ENCODE measurements at regions of chr22 and their contacts with region 1.

Region 1: DNA sequence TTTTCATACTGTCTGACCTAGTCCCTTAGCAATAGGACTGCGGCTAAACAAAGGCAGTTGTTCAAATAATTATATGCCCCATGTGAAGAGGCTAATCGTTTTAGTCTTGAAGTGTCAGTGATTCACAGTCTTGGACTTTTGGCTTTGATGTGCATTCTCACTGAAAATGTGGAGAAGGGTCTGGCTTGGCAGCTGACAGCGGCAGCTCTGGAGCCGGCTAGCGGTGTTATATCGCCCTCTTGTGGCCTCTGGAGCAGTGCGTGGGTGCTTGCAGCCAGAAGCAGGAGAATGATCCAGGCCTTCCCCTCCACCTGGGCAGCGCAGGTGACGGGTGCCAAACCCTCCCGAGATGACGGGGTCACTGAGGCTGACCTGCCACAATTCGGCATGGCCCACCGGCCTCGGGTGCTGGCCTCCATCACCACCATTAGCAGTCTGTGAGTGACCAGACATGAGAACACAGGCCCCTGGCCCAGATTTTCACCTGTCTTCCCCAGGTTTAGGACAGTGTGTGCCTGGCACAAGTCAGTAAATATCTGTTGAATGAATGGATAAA is 90.3 kb upstream of the PITPNB start:
- DNase-seq: peak; percentile 72 to 83 (median 79)
- ATAC-seq: peak; percentile 98
- H3K4me3 ChIP-seq: no peak overlapping the region
- H3K27ac ChIP-seq: no peak overlapping the region
- H3K4me1 ChIP-seq: no peaks in the 10 kb centered on the region
- H3K27me3 ChIP-seq: no peaks in the 10 kb centered on the region
- CTCF ChIP-seq: peak; percentile 83 to 89 (median 85)
- EP300 ChIP-seq: no peak
- POLR2A ChIP-seq: no peak
- RAD21 ChIP-seq: peak; percentile 78 to 86

Region 2: GRCh38 chr22:27405672-27406388 is 603.5 kb before region 1 on chr22:
- CTCF ChIA-PET with region 1: no interaction called
- POLR2A ChIA-PET with region 1: no interaction called
- in situ Hi-C with region 1: loop called (anchors 25 kb)
- intact Hi-C with region 1: no loop called
- DNase-seq: peak; percentile 43 to 70 (median 66)
- ATAC-seq: peak; percentile 79
- H3K4me3 ChIP-seq: no peak overlapping the region
- H3K27ac ChIP-seq: no peak overlapping the region
- H3K4me1 ChIP-seq: no peaks in the 10 kb centered on the region
- H3K27me3 ChIP-seq: no peaks in the 10 kb centered on the region; a peak in 1 of 5 replicates
- CTCF ChIP-seq: peak; percentile 54 to 73 (median 62)
- EP300 ChIP-seq: no peak
- POLR2A ChIP-seq: no peak
- RAD21 ChIP-seq: peak; percentile 30 to 62

Region 3: DNA sequence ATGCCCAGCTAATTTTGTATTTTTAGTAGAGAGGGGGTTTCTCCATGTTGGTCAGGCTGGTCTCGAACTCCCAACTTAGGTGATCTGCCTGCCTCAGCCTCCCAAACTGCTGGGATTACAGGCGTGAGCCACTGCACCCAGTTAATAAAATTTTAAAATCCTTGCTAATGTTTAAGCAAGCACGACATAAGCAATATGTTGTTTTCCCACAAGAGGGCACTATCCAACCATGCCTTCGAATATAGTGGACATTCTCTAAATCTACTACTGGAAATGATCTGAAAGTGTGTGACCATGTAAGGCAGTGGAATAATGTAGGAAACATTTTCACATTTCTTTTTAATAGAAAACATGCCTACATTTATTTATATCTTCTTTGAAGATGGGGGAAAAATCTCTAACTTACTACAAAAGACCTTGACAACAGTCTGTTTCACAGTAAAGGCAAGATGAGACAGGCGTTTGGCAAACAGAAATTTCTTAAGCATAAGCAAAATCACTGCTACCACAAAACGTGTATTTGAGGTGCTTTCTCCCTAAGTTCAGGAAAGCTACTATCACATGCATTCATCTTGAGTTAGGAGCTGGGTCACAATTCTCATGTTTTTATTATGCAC is 128.5 kb before region 1 on chr22:
- CTCF ChIA-PET with region 1: interaction called, 22 read pairs
- POLR2A ChIA-PET with region 1: interaction called, 3 read pairs
- in situ Hi-C with region 1: loop called (anchors 5 kb)
- intact Hi-C with region 1: loop called (anchors 2 kb)
- DNase-seq: peak in 2 of 4 experiments; percentile 17 to 58
- ATAC-seq: peak; percentile 82
- H3K4me3 ChIP-seq: no peak overlapping the region
- H3K27ac ChIP-seq: no peak overlapping the region
- H3K4me1 ChIP-seq: no peaks in the 10 kb centered on the region
- H3K27me3 ChIP-seq: no peaks in the 10 kb centered on the region
- CTCF ChIP-seq: peak; percentile 40 to 72 (median 55); a peak in 4 of 6 replicates
- EP300 ChIP-seq: no peak
- POLR2A ChIP-seq: no peak
- RAD21 ChIP-seq: peak; percentile 65 to 74

Region 4: GRCh38 chr22:27885977-27886842 is 123.1 kb before region 1 on chr22:
- CTCF ChIA-PET with region 1: interaction called, 22 read pairs
- POLR2A ChIA-PET with region 1: interaction called, 3 read pairs
- in situ Hi-C with region 1: loop called (anchors 5 kb)
- intact Hi-C with region 1: loop called (anchors 2 kb)
- DNase-seq: peak; percentile 26 to 34 (median 32)
- ATAC-seq: 0 out of 3 replicates have a peak, but pooled peaks have one; percentile 43
- H3K4me3 ChIP-seq: no peak overlapping the region
- H3K27ac ChIP-seq: no peak overlapping the region
- H3K4me1 ChIP-seq: no peaks in the 10 kb centered on the region
- H3K27me3 ChIP-seq: no peaks in the 10 kb centered on the region
- CTCF ChIP-seq: peak; percentile 40 to 66 (median 47); a peak in 5 of 6 replicates
- EP300 ChIP-seq: no peak
- POLR2A ChIP-seq: no peak
- RAD21 ChIP-seq: peak; percentile 45 to 63

Measured in K562 (cell line).